ENCODE measurements at regions of chr14 and their contacts with region 1.

Region 1: GRCh38 chr14:69794791-69795190 is 2.2 kb downstream of the SLC10A1 start:
- DNase-seq: no peak
- ATAC-seq: no peak
- H3K4me3 Mint-ChIP-seq: no peak overlapping the region
- H3K27ac Mint-ChIP-seq: peak overlapping the region in 1 of 10 donors; percentile 64
- H3K4me1 Mint-ChIP-seq: peaks cover 0 to 2% (median 0%) of the 10 kb centered on the region in 4 donors
- H3K27me3 Mint-ChIP-seq: peaks cover 0 to 9% (median 2%) of the 10 kb centered on the region in 5 donors

Region 2: DNA sequence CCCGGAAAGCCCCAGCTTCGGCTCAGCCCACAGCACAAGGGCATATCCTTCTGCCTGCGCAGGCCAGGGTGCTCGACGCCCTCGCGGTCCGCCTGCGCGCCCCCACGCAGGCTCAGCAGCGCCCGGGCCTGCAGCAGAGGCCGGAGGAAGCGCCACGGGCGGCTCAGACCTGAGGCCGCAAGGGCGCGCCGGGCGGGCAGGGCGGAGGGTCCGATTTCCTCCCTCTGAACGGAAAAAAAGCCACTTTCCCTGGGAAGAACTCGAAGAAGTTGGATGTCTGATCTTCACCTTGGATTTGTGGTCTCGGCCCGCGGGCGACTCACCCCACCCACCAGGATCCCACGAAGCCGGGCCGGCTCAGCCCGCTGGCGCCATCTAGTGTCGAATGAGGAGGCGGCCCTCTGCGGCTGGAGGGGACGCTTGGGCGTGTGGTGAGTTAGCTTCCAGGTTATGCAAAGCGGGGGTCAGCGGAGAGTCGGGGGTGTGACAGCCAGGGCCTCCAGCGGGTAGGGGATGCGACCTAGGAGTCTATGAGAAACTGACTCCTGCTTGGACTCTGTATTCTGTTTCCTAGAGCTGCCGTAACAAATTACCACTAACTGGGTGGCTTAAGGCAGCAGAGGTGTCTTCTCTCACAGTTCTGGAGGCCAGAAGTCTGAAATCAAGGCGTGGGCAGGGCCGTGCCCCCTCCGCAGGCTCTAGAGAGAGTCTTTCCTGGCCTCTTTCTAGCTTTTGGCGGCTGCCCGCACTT is 67.9 kb before region 1 on chr14:
- POLR2A ChIA-PET with region 1: interaction called, 10 read pairs
- DNase-seq: peak; percentile 65 to 90 (median 82)
- ATAC-seq: peak; percentile 92 to 95
- H3K4me3 Mint-ChIP-seq: peak overlapping the region; percentile 49 to 82 (median 72)
- H3K27ac Mint-ChIP-seq: peak overlapping the region in 9 of 10 donors; percentile 15 to 86 (median 65)
- H3K4me1 Mint-ChIP-seq: peaks cover 3 to 29% (median 10%) of the 10 kb centered on the region in 4 donors
- H3K27me3 Mint-ChIP-seq: peaks cover 0 to 1% (median 0%) of the 10 kb centered on the region in 5 donors

Measured in naive thymus-derived CD8-positive, alpha-beta T cell (primary cell).